Vagina (tissue), 2 donors: ENCODE measurements at regions of chr1 and their contacts with region 1.

Region 1: DNA sequence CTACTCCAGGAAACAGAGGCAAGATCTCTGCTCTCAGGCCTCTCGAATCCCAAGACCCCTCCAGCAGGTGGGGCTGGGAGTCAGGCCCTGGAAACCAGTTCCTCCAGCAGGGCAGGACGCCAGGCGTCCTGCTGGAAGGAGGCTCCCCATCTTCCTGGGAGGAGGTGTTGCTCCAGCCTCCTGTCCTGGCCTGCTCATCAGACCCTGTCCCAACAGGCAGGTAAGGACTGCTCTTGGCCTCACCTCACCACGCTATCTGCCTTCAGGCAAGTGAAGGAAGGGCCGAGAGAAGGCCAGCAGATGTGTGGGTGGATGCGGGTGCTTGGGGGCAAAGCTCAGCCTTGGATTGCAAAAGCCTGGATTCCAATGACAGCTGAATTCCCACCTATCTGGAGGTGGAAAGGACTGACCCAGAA is 82.9 kb downstream of the SSBP3 start:
- DNase-seq: no peak
- H3K4me3 ChIP-seq: no peak overlapping the region
- H3K27ac ChIP-seq: peak overlapping the region; percentile 74
- H3K4me1 ChIP-seq: peaks cover 92% of the 10 kb centered on the region
- H3K27me3 ChIP-seq: no peaks in the 10 kb centered on the region
- CTCF ChIP-seq: no peak
- POLR2A ChIP-seq: no peak

Region 2: GRCh38 chr1:54287176-54287650 is 36.1 kb before region 1 on chr1:
- intact Hi-C with region 1: no loop called
- DNase-seq: peak in 1 of 2 donors; percentile 97
- H3K4me3 ChIP-seq: peak overlapping the region in 1 of 2 donors; percentile 2
- H3K27ac ChIP-seq: peak overlapping the region; percentile 83
- H3K4me1 ChIP-seq: peaks cover 79% of the 10 kb centered on the region
- H3K27me3 ChIP-seq: no peaks in the 10 kb centered on the region
- CTCF ChIP-seq: no peak
- POLR2A ChIP-seq: no peak

Region 3: GRCh38 chr1:54406339-54407153 is 83.2 kb after region 1 on chr1 and contains the start of gene SSBP3:
- intact Hi-C with region 1: loop called (anchors 10 kb)
- DNase-seq: no peak
- H3K4me3 ChIP-seq: peak within 1 kb of the TSS; percentile 79 to 98
- H3K27ac ChIP-seq: peak within 1 kb of the TSS; percentile 97
- H3K4me1 ChIP-seq: peaks cover 66% of the 10 kb centered on the region
- H3K27me3 ChIP-seq: no peaks in the 10 kb centered on the region
- CTCF ChIP-seq: peak in 1 of 3 experiments; percentile 27
- POLR2A ChIP-seq: peak in 1 of 2 donors; percentile 90
- total RNA-seq, gene SSBP3: 70.7 TPM